PC-3 (cell line): ENCODE measurements at regions of chr4 and their contacts with region 1.

Region 1: DNA sequence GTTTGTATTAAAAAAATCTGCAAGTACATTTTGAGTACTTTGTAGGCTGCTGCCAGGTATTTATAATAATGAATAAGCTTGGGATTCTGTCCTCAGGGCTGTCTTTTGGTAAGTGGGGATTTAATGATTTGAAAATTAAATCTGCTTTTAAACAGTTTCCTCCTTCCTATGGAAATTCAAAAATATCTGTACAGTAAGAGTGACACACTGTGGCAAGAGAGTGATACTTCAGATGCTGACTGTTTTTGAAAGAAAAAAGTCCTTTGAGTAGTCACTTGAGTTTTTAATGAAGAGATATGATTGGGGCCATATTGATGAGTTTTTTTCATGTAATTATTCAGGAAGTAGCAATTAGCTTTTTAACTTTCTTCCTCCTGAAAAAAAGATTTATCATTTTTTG is 49.2 kb downstream of the SMARCAD1 start:
- DNase-seq: peak; percentile 30
- ATAC-seq: no peak
- H3K4me3 ChIP-seq: no peak overlapping the region
- H3K27ac ChIP-seq: no peak overlapping the region
- H3K4me1 ChIP-seq: no peaks in the 10 kb centered on the region
- H3K27me3 ChIP-seq: no peaks in the 10 kb centered on the region
- CTCF ChIP-seq: peak; percentile 52; the same call in 1 of the 2 replicates

Region 2: GRCh38 chr4:93897559-93897958 is 359.3 kb before region 1 on chr4:
- CTCF ChIA-PET with region 1: no interaction called
- POLR2A ChIA-PET with region 1: no interaction called
- intact Hi-C with region 1: loop called (anchors 5 kb)
- DNase-seq: peak; percentile 42
- ATAC-seq: peak; percentile 50; the same call in 1 of the 2 replicates
- H3K4me3 ChIP-seq: no peak overlapping the region
- H3K27ac ChIP-seq: no peak overlapping the region
- H3K4me1 ChIP-seq: no peaks in the 10 kb centered on the region
- H3K27me3 ChIP-seq: peaks cover 62% of the 10 kb centered on the region
- CTCF ChIP-seq: peak; percentile 57

Region 3: GRCh38 chr4:94127707-94128328 is 129.0 kb before region 1 on chr4:
- CTCF ChIA-PET with region 1: no interaction called
- POLR2A ChIA-PET with region 1: no interaction called
- intact Hi-C with region 1: loop called (anchors 10 kb)
- DNase-seq: peak; percentile 33
- ATAC-seq: peak; percentile 34; the same call in 1 of the 2 replicates
- H3K4me3 ChIP-seq: no peak overlapping the region
- H3K27ac ChIP-seq: no peak overlapping the region
- H3K4me1 ChIP-seq: no peaks in the 10 kb centered on the region; the same call in 1 of the 2 replicates
- H3K27me3 ChIP-seq: peaks cover 17% of the 10 kb centered on the region
- CTCF ChIP-seq: peak; percentile 67